Gastrocnemius medialis (tissue), 4 donors: ENCODE measurements at regions of chr11 and their contacts with region 1.

Region 1: GRCh38 chr11:50298182-50298988 is 265.7 kb downstream of the OR4C45 start:
- DNase-seq: no peak
- ATAC-seq: no peak
- H3K4me3 ChIP-seq: no peak overlapping the region
- H3K27ac ChIP-seq: no peak overlapping the region
- H3K4me1 ChIP-seq: no peaks in the 10 kb centered on the region
- H3K27me3 ChIP-seq: no peaks in the 10 kb centered on the region
- CTCF ChIP-seq: no peak
- POLR2A ChIP-seq: no peak

Region 2: DNA sequence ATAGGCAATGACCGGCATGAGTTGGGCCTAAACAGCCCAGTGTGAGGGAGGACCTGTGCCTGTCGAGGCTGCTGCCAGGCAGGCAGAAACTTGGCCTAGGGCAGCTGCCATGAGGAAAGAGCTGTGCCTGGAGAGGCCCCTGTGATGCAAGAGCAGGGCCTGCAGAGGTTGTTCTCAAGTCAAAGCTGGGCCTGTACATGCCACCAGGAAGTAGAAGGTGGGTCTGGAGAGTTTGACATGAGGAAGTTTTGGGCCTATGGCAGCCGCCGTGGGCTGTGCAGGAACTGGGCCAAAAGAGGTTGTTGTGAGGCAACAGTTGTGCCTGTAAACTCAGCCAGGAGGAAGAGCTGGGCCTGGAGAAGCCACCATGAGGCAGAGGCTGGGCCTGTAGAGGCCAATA is 222.5 kb before region 1 on chr11:
- in situ Hi-C with region 1: loop called in 2 of 4 experiments (anchors 25 kb)
- intact Hi-C with region 1: no loop called
- DNase-seq: no peak
- ATAC-seq: no peak
- H3K4me3 ChIP-seq: no peak overlapping the region
- H3K27ac ChIP-seq: no peak overlapping the region
- H3K4me1 ChIP-seq: no peaks in the 10 kb centered on the region
- H3K27me3 ChIP-seq: no peaks in the 10 kb centered on the region
- CTCF ChIP-seq: no peak
- POLR2A ChIP-seq: no peak